CD4-positive, alpha-beta T cell (primary cell): ENCODE measurements at regions of chr15 and their contacts with region 1.

Region 1: GRCh38 chr15:59528965-59529402 is 82.6 kb upstream of the GCNT3 start:
- DNase-seq: peak; percentile 54 to 81 (median 59)
- ATAC-seq: peak; percentile 80
- H3K4me3 ChIP-seq: no peak overlapping the region
- H3K4me3 Mint-ChIP-seq: no peak overlapping the region
- H3K27ac ChIP-seq: no peak overlapping the region
- H3K27ac Mint-ChIP-seq: no peak overlapping the region
- H3K4me1 ChIP-seq: peaks cover 15% of the 10 kb centered on the region
- H3K4me1 Mint-ChIP-seq: peaks cover 13% of the 10 kb centered on the region
- H3K27me3 ChIP-seq: no peaks in the 10 kb centered on the region
- H3K27me3 Mint-ChIP-seq: peaks cover 3% of the 10 kb centered on the region
- CTCF ChIP-seq: peak; percentile 85

Region 2: DNA sequence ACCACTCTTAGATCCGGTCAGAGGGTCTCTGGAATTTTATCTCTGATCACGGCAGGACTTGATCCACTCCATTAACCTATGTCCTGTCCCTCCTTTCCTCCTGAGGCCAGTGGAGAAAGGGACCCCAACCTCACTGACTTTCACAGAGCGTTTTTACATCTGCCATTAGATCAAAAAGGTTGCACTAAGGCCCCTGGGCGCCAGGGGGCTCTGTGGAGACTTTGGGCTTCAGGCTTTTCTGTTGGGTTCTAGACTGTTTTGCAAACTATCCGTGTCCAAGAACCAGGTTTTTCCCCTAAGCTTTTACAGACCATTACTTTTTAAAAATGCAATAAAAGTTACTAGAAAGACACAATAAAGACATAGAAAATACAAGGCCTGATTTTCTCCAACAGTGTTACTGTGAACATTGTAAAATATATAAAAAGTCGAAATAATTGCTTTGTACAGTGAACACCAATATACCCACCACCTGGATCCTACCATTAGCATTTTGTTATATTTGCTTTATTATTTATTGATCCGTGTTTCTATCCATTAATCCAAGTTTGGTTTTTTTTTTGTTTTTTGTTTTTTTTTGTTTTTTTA is 1662.7 kb before region 1 on chr15:
- CTCF ChIA-PET with region 1: no interaction called
- POLR2A ChIA-PET with region 1: no interaction called
- intact Hi-C with region 1: loop called in 1 of 2 experiments (anchors 10 kb)
- DNase-seq: peak in 13 of 14 experiments; percentile 11 to 57 (median 27)
- ATAC-seq: no peak
- H3K4me3 ChIP-seq: no peak overlapping the region
- H3K4me3 Mint-ChIP-seq: no peak overlapping the region
- H3K27ac ChIP-seq: no peak overlapping the region
- H3K27ac Mint-ChIP-seq: no peak overlapping the region
- H3K4me1 ChIP-seq: peaks cover 5% of the 10 kb centered on the region
- H3K4me1 Mint-ChIP-seq: no peaks in the 10 kb centered on the region
- H3K27me3 ChIP-seq: peaks cover 13 to 26% of the 10 kb centered on the region in 2 experiments
- H3K27me3 Mint-ChIP-seq: peaks cover 53% of the 10 kb centered on the region
- CTCF ChIP-seq: peak; percentile 68

Region 3: GRCh38 chr15:58227706-58228543 is 1301.1 kb before region 1 on chr15:
- CTCF ChIA-PET with region 1: no interaction called
- POLR2A ChIA-PET with region 1: no interaction called
- intact Hi-C with region 1: loop called (anchors 1 to 5 kb)
- DNase-seq: peak; percentile 41 to 80 (median 56)
- ATAC-seq: peak; percentile 43
- H3K4me3 ChIP-seq: no peak overlapping the region
- H3K4me3 Mint-ChIP-seq: no peak overlapping the region
- H3K27ac ChIP-seq: no peak overlapping the region
- H3K27ac Mint-ChIP-seq: no peak overlapping the region
- H3K4me1 ChIP-seq: peaks cover 5% of the 10 kb centered on the region
- H3K4me1 Mint-ChIP-seq: peaks cover 15% of the 10 kb centered on the region
- H3K27me3 ChIP-seq: no peaks in the 10 kb centered on the region
- H3K27me3 Mint-ChIP-seq: no peaks in the 10 kb centered on the region
- CTCF ChIP-seq: peak; percentile 87

Region 4: GRCh38 chr15:58987489-58988005 is 541.4 kb before region 1 on chr15 and contains the start of gene RNF111:
- CTCF ChIA-PET with region 1: no interaction called
- POLR2A ChIA-PET with region 1: interaction called, 3 read pairs
- intact Hi-C with region 1: loop called in 1 of 2 experiments (anchors 10 kb)
- DNase-seq: peak; percentile 79 to 97 (median 86)
- ATAC-seq: peak; percentile 95
- H3K4me3 ChIP-seq: peak within 1 kb of the TSS; percentile 99
- H3K4me3 Mint-ChIP-seq: peak within 1 kb of the TSS; percentile 98
- H3K27ac ChIP-seq: peak within 1 kb of the TSS; percentile 84 to 87
- H3K27ac Mint-ChIP-seq: peak within 1 kb of the TSS; percentile 92
- H3K4me1 ChIP-seq: peaks cover 14% of the 10 kb centered on the region
- H3K4me1 Mint-ChIP-seq: peaks cover 51% of the 10 kb centered on the region
- H3K27me3 ChIP-seq: no peaks in the 10 kb centered on the region
- H3K27me3 Mint-ChIP-seq: no peaks in the 10 kb centered on the region
- CTCF ChIP-seq: no peak
- total RNA-seq, gene RNF111: 35.4 to 37.1 TPM

Region 5: DNA sequence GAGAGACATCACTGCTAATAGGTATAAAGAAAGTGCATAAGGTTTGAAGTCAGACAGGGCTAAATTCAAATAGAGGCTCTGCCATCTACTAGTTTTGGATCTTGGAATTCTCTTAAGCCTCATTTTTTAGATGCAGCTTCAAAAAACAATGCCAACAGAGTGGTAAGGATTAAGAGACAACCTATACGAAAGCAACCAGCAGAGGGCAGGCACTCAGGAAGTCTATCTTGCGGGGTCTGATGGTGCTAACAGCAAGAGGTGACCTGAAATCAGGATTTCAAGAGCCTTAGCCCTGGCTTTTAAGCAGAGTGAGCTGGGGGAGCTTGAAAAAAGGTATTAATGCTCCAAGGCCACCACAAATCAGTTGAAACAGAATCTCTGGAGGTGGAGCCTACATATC is 281.6 kb before region 1 on chr15:
- CTCF ChIA-PET with region 1: interaction called, 7 read pairs
- POLR2A ChIA-PET with region 1: interaction called, 4 read pairs
- intact Hi-C with region 1: loop called (anchors 1 to 2 kb)
- DNase-seq: peak in 13 of 14 experiments; percentile 8 to 69 (median 27)
- ATAC-seq: peak; percentile 58
- H3K4me3 ChIP-seq: no peak overlapping the region
- H3K4me3 Mint-ChIP-seq: no peak overlapping the region
- H3K27ac ChIP-seq: no peak overlapping the region
- H3K27ac Mint-ChIP-seq: no peak overlapping the region
- H3K4me1 ChIP-seq: peaks cover 2% of the 10 kb centered on the region
- H3K4me1 Mint-ChIP-seq: no peaks in the 10 kb centered on the region
- H3K27me3 ChIP-seq: no peaks in the 10 kb centered on the region
- H3K27me3 Mint-ChIP-seq: no peaks in the 10 kb centered on the region
- CTCF ChIP-seq: peak; percentile 37

Region 6: DNA sequence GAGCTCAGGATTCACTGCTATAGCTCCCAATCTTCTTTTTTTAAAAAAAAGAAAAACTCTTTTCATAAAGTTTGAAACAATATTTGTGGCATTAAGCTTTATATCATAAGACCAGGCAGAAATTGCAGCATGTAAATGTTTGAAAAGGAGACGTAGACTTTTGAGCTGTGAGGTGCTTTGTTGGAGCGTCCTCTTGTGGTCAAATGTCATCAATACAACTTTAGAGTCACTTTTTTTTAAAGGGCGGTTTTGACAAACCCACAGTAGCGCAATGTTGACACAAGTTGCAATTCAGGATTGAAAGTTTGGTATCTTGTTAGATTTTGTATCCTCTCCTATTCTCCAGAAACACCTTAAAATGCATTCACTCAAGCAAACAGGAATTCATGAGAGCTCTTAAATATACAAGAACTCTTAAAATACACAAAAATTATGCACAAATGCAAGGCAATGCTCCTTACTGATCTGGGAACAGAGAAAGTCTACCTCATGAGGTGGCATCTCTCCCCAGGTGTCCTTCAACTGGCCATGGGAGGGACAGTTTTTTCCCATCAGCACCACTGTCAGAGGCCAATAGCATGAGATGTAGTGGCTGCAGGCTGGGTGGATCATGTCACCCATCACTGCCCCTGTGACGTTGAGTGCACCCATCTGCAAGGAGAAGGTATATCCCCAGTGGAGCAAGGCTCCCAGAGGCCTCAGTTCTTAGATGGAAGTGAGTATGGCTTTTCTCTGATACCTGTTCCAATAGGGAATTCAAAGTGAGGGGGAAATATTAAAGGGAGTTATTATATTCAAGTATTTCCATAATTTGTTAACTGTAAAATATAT is 798.1 kb after region 1 on chr15:
- CTCF ChIA-PET with region 1: interaction called, 4 read pairs
- POLR2A ChIA-PET with region 1: no interaction called
- intact Hi-C with region 1: loop called in 1 of 2 experiments (anchors 10 kb)
- DNase-seq: peak in 9 of 14 experiments; percentile 0 to 78 (median 8)
- ATAC-seq: peak; percentile 49
- H3K4me3 ChIP-seq: no peak overlapping the region
- H3K4me3 Mint-ChIP-seq: no peak overlapping the region
- H3K27ac ChIP-seq: no peak overlapping the region
- H3K27ac Mint-ChIP-seq: no peak overlapping the region
- H3K4me1 ChIP-seq: no peaks in the 10 kb centered on the region
- H3K4me1 Mint-ChIP-seq: peaks cover 6% of the 10 kb centered on the region
- H3K27me3 ChIP-seq: peaks cover 13 to 23% of the 10 kb centered on the region in 2 experiments
- H3K27me3 Mint-ChIP-seq: peaks cover 77% of the 10 kb centered on the region
- CTCF ChIP-seq: peak; percentile 69